Posterior cingulate gyrus (tissue), 11 donors: ENCODE measurements at regions of chr16 and their contacts with region 1.

Region 1: GRCh38 chr16:86343027-86343787 is 167.1 kb upstream of the FOXF1 start:
- DNase-seq: peak in 1 of 10 donors; percentile 74

Region 2: DNA sequence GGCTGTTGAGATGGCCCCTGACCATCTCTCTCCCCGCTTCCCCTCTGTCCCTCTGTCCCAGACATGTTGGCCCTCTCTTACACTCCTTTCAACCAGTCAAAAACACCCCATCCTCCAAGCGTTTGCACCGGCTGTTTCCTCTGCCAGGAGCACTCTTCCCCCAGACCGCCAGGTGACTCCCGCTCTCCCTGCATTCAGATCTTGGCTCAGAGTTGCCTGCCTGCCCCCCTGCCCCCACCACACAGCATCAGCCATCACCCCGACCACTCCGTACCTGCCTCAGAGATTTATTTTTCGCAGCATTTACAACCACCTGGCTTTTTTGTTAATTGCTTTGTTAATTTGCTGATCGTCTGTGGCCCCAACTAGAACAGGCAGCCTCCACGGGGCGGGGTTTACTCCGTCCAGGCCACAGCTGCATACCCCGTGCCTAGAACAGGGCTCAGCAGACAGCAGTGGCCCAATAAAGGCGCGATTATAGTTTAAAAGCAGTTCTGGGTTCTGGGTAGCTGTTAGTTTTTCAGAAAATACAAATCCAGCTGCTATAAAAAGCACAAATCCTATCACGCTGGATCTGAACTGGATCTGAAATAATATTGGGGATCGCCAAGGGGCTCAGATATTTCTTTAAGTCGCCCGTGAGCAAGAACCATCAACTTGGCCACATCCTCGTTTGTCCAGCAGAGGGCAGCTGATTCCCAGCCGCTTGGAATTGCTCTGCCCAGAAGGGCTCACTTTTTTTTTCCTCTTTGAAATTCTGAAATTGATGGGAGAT is 270.7 kb before region 1 on chr16:
- intact Hi-C with region 1: loop called (anchors 10 kb)
- DNase-seq: peak in 9 of 10 donors; percentile 52 to 95 (median 74)